Heart left ventricle (tissue), 16 donors: ENCODE measurements at regions of chr19 and their contacts with region 1.

Region 1: DNA sequence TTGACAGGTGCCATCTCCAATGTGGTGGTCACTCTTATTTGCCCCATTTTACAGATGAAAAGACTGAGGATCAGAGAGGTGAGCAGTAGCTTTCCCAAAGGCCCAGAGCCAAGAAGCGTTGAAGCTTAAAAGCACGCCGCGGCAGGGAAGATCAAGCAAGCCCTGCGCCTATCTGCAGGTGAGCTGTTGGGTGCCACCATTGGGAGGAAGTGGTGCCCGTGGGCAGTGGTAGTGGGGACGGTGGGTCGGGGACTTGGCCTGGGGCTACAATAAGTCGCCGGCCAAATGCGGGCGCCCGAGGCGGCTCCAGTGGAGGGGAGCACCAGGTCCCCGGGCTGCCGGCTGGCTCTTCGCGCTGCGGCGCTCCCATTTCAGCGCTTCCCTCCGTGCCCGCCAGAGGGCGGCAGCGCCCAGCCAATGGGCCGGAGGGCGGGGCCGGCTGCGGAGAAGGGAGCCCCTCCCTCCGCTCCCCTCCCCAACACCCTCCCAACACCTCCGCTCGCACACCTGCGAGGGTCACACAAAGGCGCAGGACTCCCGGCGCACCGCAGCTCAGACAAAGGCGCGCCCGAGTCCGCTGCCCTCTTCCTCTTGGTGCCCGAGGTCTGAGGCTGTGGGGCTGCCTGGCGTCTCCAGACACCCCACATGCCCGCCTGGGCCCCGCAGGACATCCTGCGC is 744 bp upstream of the POU2F2 start:
- DNase-seq: peak; percentile 54 to 89 (median 68)
- ATAC-seq: peak in 3 of 4 donors; percentile 71 to 87 (median 74)
- H3K4me3 ChIP-seq: peak overlapping the region in 10 of 12 donors; percentile 12 to 65 (median 32)
- H3K27ac ChIP-seq: peak overlapping the region in 1 of 12 donors; percentile 64
- H3K4me1 ChIP-seq: peaks cover 2 to 54% (median 10%) of the 10 kb centered on the region in 12 donors
- H3K27me3 ChIP-seq: peaks cover 6 to 53% (median 21%) of the 10 kb centered on the region in 9 donors
- CTCF ChIP-seq: peak; percentile 90 to 99 (median 96)
- POLR2A ChIP-seq: no peak

Region 2: DNA sequence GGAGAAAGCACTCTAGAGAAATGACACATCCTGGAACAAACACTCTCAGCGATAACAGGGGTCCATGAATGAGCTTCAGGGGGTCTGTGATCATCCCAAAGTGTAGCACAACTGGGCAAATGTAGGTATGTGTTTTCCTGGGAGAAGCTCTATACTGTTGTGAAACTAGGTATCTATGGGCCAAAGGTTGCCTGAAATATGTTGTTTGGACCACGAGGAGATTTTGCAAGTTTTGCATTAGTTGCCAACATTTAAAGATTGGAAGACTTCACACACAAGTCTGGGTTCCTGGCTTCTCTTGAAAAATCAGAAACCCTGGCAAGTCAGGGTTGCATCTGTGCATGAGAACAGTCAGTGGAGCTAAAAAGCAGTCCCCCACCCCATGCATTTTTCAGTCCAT is 25.9 kb after region 1 on chr19:
- intact Hi-C with region 1: no loop called
- DNase-seq: no peak
- ATAC-seq: no peak
- H3K4me3 ChIP-seq: no peak overlapping the region
- H3K27ac ChIP-seq: no peak overlapping the region
- H3K4me1 ChIP-seq: no peaks in the 10 kb centered on the region
- H3K27me3 ChIP-seq: peaks cover 0 to 59% (median 5%) of the 10 kb centered on the region in 9 donors
- CTCF ChIP-seq: no peak
- POLR2A ChIP-seq: no peak

Region 3: GRCh38 chr19:42184401-42184861 is 51.4 kb after region 1 on chr19:
- intact Hi-C with region 1: loop called (anchors 1 to 5 kb)
- DNase-seq: peak; percentile 54 to 79 (median 73)
- ATAC-seq: peak in 3 of 4 donors; percentile 70 to 88 (median 80)
- H3K4me3 ChIP-seq: no peak overlapping the region
- H3K27ac ChIP-seq: peak overlapping the region in 2 of 12 donors; percentile 3 to 19
- H3K4me1 ChIP-seq: peaks cover 0 to 27% (median 0%) of the 10 kb centered on the region in 12 donors
- H3K27me3 ChIP-seq: peaks cover 13 to 39% (median 21%) of the 10 kb centered on the region in 9 donors
- CTCF ChIP-seq: peak; percentile 78 to 90 (median 84)
- POLR2A ChIP-seq: no peak

Region 4: GRCh38 chr19:42313096-42313839 is 180.3 kb after region 1 on chr19 and contains the start of gene TMEM145:
- intact Hi-C with region 1: loop called in 3 of 10 experiments (anchors 5 to 10 kb)
- DNase-seq: peak in 2 of 5 donors; percentile 52 to 63
- ATAC-seq: peak; percentile 58 to 86 (median 82)
- H3K4me3 ChIP-seq: peak within 1 kb of the TSS; percentile 24 to 74 (median 58)
- H3K27ac ChIP-seq: peak within 1 kb of the TSS in 1 of 12 donors; percentile 33
- H3K4me1 ChIP-seq: peaks cover 0 to 28% (median 5%) of the 10 kb centered on the region in 12 donors
- H3K27me3 ChIP-seq: peaks cover 0 to 33% (median 18%) of the 10 kb centered on the region in 9 donors
- CTCF ChIP-seq: peak in 5 of 12 donors; percentile 7 to 38 (median 23)
- POLR2A ChIP-seq: no peak
- total RNA-seq, gene TMEM145: 0.16 to 0.27 TPM in 2 of 9 donors, not detected in the others

Region 5: DNA sequence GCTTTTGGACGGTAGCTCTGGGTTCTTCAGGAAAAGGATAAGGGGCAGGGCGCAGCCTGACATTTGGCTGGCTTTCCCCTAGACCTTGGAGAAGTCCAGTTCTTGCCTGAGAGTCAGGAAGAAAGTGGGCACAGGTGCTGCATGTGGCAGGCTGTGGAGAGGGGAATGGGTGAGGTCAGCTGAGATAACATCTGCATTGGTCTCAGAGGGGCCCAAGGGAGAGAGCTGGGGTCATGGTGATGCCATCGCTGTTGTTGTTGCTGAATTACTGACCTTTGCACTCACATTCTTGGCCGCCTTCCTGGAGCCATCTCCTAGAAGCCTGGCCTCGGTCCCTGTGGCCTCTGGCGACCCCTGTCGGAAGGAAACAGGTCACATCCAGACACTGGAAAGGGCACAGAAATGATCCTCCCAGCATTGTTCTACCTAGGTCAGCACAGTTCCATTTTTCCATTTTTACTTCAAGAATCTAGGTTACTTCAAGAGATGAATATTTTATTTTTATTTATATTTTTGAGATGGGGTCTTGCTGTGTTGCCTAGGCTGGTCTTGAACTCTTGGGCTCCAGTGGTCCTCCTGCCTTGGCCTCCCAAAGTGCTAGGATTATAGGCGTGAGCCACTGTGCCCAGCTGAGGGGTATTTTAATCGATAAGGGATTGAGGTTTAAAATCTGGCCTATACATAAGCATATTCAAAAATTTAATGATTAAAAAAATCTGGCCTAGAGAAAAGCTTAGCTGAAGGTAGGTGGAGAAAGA is 300.7 kb after region 1 on chr19:
- intact Hi-C with region 1: loop called in 2 of 10 experiments (anchors 5 to 10 kb)
- DNase-seq: peak; percentile 87 to 92 (median 91)
- ATAC-seq: peak; percentile 87 to 91 (median 91)
- H3K4me3 ChIP-seq: no peak overlapping the region
- H3K27ac ChIP-seq: peak overlapping the region; percentile 1 to 88 (median 69)
- H3K4me1 ChIP-seq: peaks cover 0 to 35% (median 21%) of the 10 kb centered on the region in 12 donors
- H3K27me3 ChIP-seq: no peaks in the 10 kb centered on the region
- CTCF ChIP-seq: peak; percentile 61 to 85 (median 74)
- POLR2A ChIP-seq: no peak